BJ (cell line): ENCODE measurements at regions of chr17 and their contacts with region 1.

Region 1: DNA sequence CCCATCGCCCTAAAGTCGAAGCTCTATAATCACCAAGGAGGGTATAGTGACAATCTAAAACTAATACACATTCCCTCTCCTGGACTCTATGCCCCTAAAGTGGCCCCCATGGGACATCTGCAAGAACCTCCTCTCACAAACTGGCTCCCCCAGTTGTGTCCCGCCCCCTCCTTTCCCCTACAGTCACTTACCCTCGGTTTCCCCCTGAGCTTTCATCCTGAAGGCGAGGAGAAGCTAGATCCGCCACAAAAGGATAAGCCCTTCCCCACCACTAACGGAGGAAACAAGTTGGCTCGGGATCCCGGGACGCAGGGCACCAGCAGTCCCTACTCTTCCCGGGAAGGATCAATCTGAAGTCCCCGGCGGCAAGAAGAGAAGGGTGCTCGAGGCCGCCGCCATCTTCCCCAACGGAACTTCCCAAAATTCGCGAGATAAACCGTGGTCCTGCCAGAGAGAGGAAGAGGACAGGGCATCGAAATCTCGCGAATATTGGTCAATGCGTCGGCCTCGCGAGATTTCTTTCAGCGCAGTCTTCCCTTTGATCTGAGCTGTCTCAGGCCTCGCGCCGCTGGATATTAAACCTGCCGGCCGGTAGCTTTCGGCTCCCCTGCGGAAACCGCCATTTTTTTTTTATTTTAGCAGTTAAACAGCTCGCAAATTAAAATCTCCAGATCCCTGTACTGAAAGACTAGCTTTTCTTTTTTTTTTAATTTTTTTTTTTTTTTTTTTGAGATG is at the start of gene MED1:
- DNase-seq: peak; percentile 91
- H3K4me3 ChIP-seq: peak within 1 kb of the TSS; percentile 96
- H3K27me3 ChIP-seq: no peaks in the 10 kb centered on the region
- CTCF ChIP-seq: no peak
- polyA plus RNA-seq, gene MED1: 22.9 and 33.3 TPM in 2 replicates

Region 2: DNA sequence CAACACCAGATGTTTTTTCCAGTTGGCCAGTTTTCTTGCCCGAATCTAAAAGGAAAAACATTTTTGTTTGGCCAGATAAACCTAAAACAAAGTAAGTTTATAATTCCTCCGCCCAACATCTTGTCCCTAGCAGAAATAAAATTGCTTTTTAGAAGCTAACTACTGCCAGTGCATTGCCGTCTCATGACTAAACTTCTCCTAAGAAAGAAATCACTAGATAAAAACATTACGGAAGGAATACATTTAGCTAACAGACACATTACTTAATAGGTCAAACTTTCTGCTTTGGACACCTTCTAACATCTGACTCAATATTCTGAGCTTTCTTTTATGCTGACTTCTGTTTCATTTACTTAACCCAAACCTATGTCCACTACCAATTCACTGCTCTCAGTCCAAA is 85.8 kb before region 1 on chr17:
- CTCF ChIA-PET with region 1: no interaction called
- POLR2A ChIA-PET with region 1: no interaction called
- DNase-seq: peak; percentile 69
- H3K4me3 ChIP-seq: peak overlapping the region; percentile 6; the same call in 1 of the 2 replicates
- H3K27me3 ChIP-seq: no peaks in the 10 kb centered on the region
- CTCF ChIP-seq: no peak

Region 3: GRCh38 chr17:39461113-39461925 is 10.3 kb after region 1 on chr17 and contains the start of gene CDK12:
- CTCF ChIA-PET with region 1: interaction called, 3 read pairs
- POLR2A ChIA-PET with region 1: interaction called, 18 read pairs
- DNase-seq: peak; percentile 92
- H3K4me3 ChIP-seq: peak within 1 kb of the TSS; percentile 81
- H3K27me3 ChIP-seq: no peaks in the 10 kb centered on the region
- CTCF ChIP-seq: no peak
- polyA plus RNA-seq, gene CDK12: 16.6 and 19.1 TPM in 2 replicates

Region 4: DNA sequence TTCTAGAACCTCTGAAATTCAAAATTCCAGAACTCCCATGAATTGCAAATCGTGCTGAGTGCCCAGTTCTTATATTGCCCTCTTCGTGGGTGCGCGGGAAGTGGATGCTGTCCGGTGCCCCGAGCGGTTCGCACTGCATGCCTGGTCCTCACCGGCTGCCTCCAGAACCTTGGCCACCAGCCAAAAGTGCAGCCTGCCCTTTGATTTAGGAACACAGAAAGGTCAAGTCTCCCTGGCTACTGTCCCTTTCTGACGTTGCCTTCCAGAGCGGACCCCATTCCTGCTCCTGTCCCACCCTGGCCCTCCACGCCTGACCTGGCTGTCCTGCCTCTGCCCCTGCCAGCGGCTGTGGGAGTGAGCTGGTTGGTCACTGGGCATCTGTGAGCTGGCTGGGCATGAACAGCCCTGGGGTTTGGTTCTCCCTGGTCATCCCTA is 147.1 kb after region 1 on chr17:
- CTCF ChIA-PET with region 1: no interaction called
- POLR2A ChIA-PET with region 1: interaction called, 16 read pairs
- DNase-seq: no peak
- H3K4me3 ChIP-seq: no peak overlapping the region
- H3K27me3 ChIP-seq: peaks cover 72% of the 10 kb centered on the region
- CTCF ChIP-seq: no peak